H1 (cell line): ENCODE measurements at regions of chr2 and their contacts with region 1.

Region 1: DNA sequence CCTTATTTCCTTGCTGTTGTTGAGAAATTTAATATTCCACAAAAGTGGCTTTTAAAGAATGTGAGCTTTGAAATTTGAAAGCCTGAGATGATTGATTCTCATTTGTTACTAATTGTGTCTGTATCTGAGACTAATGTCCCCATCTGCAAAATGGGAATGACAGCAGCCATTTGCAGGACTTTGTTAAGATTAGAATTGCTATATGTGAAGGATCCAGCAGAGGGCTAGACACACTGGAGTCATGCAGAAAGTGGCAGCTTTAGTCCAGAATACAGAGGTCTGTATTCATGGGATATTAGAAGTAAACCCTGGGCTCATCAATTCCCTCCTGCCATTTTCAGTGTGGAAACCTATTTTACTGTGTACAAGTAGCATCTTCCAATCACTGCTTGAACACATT is 296.5 kb upstream of the GYPC start:
- DNase-seq: no peak
- H3K4me3 ChIP-seq: no peak overlapping the region
- H3K27ac ChIP-seq: no peak overlapping the region
- H3K4me1 ChIP-seq: no peaks in the 10 kb centered on the region
- H3K27me3 ChIP-seq: no peaks in the 10 kb centered on the region
- CTCF ChIP-seq: peak in 2 of 3 experiments; percentile 45 to 65; a peak in 3 of 4 replicates
- EP300 ChIP-seq: no peak
- POLR2A ChIP-seq: no peak
- RAD21 ChIP-seq: peak; percentile 60 to 65

Region 2: DNA sequence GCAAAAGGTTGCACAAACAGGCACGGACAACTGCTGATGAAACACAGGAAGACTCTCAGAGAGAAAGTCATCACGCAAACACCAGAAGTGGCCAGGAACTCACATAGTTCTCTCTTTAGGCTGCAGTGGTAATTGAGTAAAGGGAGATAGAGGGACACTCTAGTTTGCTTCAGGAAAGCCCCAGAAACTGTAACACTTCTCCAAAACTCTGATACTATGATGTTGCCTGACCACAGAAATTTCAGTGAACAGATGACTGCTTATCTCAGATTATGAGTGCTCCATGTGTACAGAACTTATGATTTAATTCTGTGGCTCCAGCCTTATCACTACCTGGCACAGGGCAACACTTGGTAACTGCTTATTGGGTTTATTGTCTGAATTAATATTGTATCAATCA is 15.0 kb before region 1 on chr2:
- CTCF ChIA-PET with region 1: interaction called, 11 read pairs
- POLR2A ChIA-PET with region 1: no interaction called
- DNase-seq: no peak
- H3K4me3 ChIP-seq: no peak overlapping the region
- H3K27ac ChIP-seq: no peak overlapping the region
- H3K4me1 ChIP-seq: no peaks in the 10 kb centered on the region
- H3K27me3 ChIP-seq: no peaks in the 10 kb centered on the region
- CTCF ChIP-seq: no peak
- EP300 ChIP-seq: no peak
- POLR2A ChIP-seq: no peak
- RAD21 ChIP-seq: no peak

Region 3: GRCh38 chr2:126504949-126505348 is 145.5 kb after region 1 on chr2:
- CTCF ChIA-PET with region 1: no interaction called
- POLR2A ChIA-PET with region 1: no interaction called
- DNase-seq: no peak
- H3K4me3 ChIP-seq: no peak overlapping the region
- H3K27ac ChIP-seq: no peak overlapping the region
- H3K4me1 ChIP-seq: peaks cover 0 to 7% (median 2%) of the 10 kb centered on the region in 4 experiments; a peak in 2 of 7 replicates
- H3K27me3 ChIP-seq: no peaks in the 10 kb centered on the region
- CTCF ChIP-seq: no peak
- EP300 ChIP-seq: no peak
- POLR2A ChIP-seq: no peak
- RAD21 ChIP-seq: no peak

Region 4: GRCh38 chr2:126921066-126921465 is 561.6 kb after region 1 on chr2:
- CTCF ChIA-PET with region 1: no interaction called
- POLR2A ChIA-PET with region 1: no interaction called
- DNase-seq: no peak
- H3K4me3 ChIP-seq: no peak overlapping the region
- H3K27ac ChIP-seq: no peak overlapping the region
- H3K4me1 ChIP-seq: no peaks in the 10 kb centered on the region
- H3K27me3 ChIP-seq: no peaks in the 10 kb centered on the region
- CTCF ChIP-seq: no peak
- EP300 ChIP-seq: no peak
- POLR2A ChIP-seq: no peak
- RAD21 ChIP-seq: no peak